ENCODE measurements at regions of chr2 and their contacts with region 1.

Region 1: GRCh38 chr2:68751397-68752339 is 17.1 kb downstream of the ARHGAP25 start:
- DNase-seq: peak; percentile 68
- H3K4me3 ChIP-seq: no peak overlapping the region
- H3K27ac ChIP-seq: no peak overlapping the region
- H3K27me3 ChIP-seq: no peaks in the 10 kb centered on the region
- CTCF ChIP-seq: peak; percentile 95

Region 2: GRCh38 chr2:68467077-68467960 is 284.3 kb before region 1 on chr2 and contains the starts of genes APLF and FBXO48:
- CTCF ChIA-PET with region 1: interaction called, 25 read pairs
- POLR2A ChIA-PET with region 1: no interaction called
- DNase-seq: peak; percentile 97
- H3K4me3 ChIP-seq: peak within 1 kb of the TSS; percentile 98
- H3K27ac ChIP-seq: peak within 1 kb of the TSS; percentile 77
- H3K27me3 ChIP-seq: no peaks in the 10 kb centered on the region
- CTCF ChIP-seq: no peak
- polyA plus RNA-seq, gene APLF: 2.5 and 3.6 TPM in 2 replicates
- polyA plus RNA-seq, gene FBXO48: 0.66 and 0.89 TPM in 2 replicates

Region 3: DNA sequence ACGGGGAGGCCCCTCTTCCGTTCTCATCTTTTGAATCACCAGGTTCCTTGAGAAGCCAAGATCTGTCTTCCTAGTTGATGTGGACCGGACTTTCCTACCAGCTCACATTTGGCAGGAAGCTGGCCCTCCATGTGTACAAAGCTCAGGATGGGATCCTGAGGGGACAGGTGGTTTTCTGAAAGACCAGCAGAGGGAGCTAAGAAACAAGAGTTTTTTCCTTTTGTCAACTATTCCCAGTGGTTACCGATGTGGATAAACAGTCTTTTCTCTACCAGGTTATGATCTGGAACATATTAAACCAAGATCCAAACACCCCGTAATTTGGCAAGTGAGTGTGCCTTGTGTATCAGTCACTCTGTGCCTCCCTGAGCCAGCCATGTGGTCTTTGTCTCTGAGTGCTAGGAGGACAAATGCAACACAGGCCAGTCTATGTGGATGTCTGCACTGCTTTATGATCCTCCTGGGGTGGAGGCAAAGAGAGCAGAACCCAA is 42.2 kb before region 1 on chr2:
- CTCF ChIA-PET with region 1: interaction called, 25 read pairs
- POLR2A ChIA-PET with region 1: no interaction called
- DNase-seq: peak; percentile 41
- H3K4me3 ChIP-seq: no peak overlapping the region
- H3K27ac ChIP-seq: no peak overlapping the region
- H3K27me3 ChIP-seq: peaks cover 6% of the 10 kb centered on the region
- CTCF ChIP-seq: peak; percentile 80

Region 4: GRCh38 chr2:68762665-68763064 is 11.0 kb after region 1 on chr2:
- CTCF ChIA-PET with region 1: interaction called, 21 read pairs
- POLR2A ChIA-PET with region 1: interaction called, 3 read pairs
- DNase-seq: no peak
- H3K4me3 ChIP-seq: no peak overlapping the region
- H3K27ac ChIP-seq: no peak overlapping the region
- H3K27me3 ChIP-seq: no peaks in the 10 kb centered on the region
- CTCF ChIP-seq: no peak

Region 5: GRCh38 chr2:68846091-68846490 is 94.4 kb after region 1 on chr2:
- CTCF ChIA-PET with region 1: interaction called, 14 read pairs
- POLR2A ChIA-PET with region 1: no interaction called
- DNase-seq: no peak
- H3K4me3 ChIP-seq: no peak overlapping the region
- H3K27ac ChIP-seq: no peak overlapping the region
- H3K27me3 ChIP-seq: peaks cover 4% of the 10 kb centered on the region
- CTCF ChIP-seq: no peak

Region 6: GRCh38 chr2:68918497-68918896 is 166.8 kb after region 1 on chr2:
- CTCF ChIA-PET with region 1: interaction called, 129 read pairs
- POLR2A ChIA-PET with region 1: no interaction called
- DNase-seq: no peak
- H3K4me3 ChIP-seq: no peak overlapping the region
- H3K27ac ChIP-seq: no peak overlapping the region
- H3K27me3 ChIP-seq: no peaks in the 10 kb centered on the region
- CTCF ChIP-seq: no peak